CD4-positive, alpha-beta T cell (primary cell): ENCODE measurements at regions of chr14 and their contacts with region 1.

Region 1: GRCh38 chr14:64914237-64914971 is at the start of gene CHURC1:
- DNase-seq: peak; percentile 94 to 99 (median 96)
- ATAC-seq: peak; percentile 95
- H3K4me3 ChIP-seq: peak within 1 kb of the TSS; percentile 86
- H3K4me3 Mint-ChIP-seq: peak within 1 kb of the TSS; percentile 93
- H3K27ac ChIP-seq: peak within 1 kb of the TSS; percentile 99
- H3K27ac Mint-ChIP-seq: peak within 1 kb of the TSS; percentile 88
- H3K4me1 ChIP-seq: peaks cover 34% of the 10 kb centered on the region
- H3K4me1 Mint-ChIP-seq: peaks cover 57% of the 10 kb centered on the region
- H3K27me3 ChIP-seq: peaks cover 0 to under 1% of the 10 kb centered on the region in 2 experiments
- H3K27me3 Mint-ChIP-seq: no peaks in the 10 kb centered on the region
- CTCF ChIP-seq: no peak
- total RNA-seq, gene CHURC1: 50.1 to 54.0 TPM

Region 2: GRCh38 chr14:64928239-64929013 is 14.0 kb after region 1 on chr14:
- CTCF ChIA-PET with region 1: interaction called, 6 read pairs
- POLR2A ChIA-PET with region 1: interaction called, 132 read pairs
- intact Hi-C with region 1: loop called (anchors 1 to 2 kb)
- DNase-seq: peak in 3 of 14 experiments; percentile 56 to 80 (median 59)
- ATAC-seq: peak; percentile 80
- H3K4me3 ChIP-seq: peak overlapping the region; percentile 9
- H3K4me3 Mint-ChIP-seq: no peak overlapping the region
- H3K27ac ChIP-seq: peak overlapping the region; percentile 61 to 71
- H3K27ac Mint-ChIP-seq: no peak overlapping the region
- H3K4me1 ChIP-seq: peaks cover 41% of the 10 kb centered on the region
- H3K4me1 Mint-ChIP-seq: peaks cover 21% of the 10 kb centered on the region
- H3K27me3 ChIP-seq: no peaks in the 10 kb centered on the region
- H3K27me3 Mint-ChIP-seq: no peaks in the 10 kb centered on the region
- CTCF ChIP-seq: no peak